B cell (primary cell): ENCODE measurements at regions of chr15 and their contacts with region 1.

Region 1: GRCh38 chr15:43769584-43770228 is 7.1 kb downstream of the ELL3 start:
- DNase-seq: peak; percentile 74
- ATAC-seq: peak; percentile 78
- H3K4me3 ChIP-seq: no peak overlapping the region
- H3K4me3 Mint-ChIP-seq: no peak overlapping the region
- H3K27ac ChIP-seq: no peak overlapping the region
- H3K27ac Mint-ChIP-seq: no peak overlapping the region
- H3K4me1 ChIP-seq: no peaks in the 10 kb centered on the region
- H3K4me1 Mint-ChIP-seq: peaks cover 19% of the 10 kb centered on the region
- H3K27me3 ChIP-seq: no peaks in the 10 kb centered on the region
- H3K27me3 Mint-ChIP-seq: no peaks in the 10 kb centered on the region
- CTCF ChIP-seq: peak; percentile 90

Region 2: DNA sequence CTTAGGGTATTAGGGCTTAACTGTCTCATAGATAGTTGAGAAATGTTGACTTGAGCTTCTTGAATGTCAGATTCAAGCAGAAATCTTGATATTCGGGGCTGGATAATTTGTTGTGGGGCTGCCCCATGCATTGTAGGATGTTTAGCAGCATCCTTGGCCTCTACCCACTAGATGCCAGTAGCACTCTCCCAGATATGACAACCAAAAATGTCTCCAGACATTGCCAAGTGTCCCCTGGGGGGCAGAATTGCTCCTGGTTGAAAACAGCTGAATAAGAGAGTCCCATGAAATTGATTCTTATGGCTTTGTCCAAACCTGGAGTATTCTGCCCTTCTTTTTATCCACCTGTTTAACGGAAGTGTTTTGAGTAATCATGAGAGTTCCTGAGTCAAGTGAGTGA is 423.4 kb before region 1 on chr15:
- CTCF ChIA-PET with region 1: no interaction called
- POLR2A ChIA-PET with region 1: no interaction called
- intact Hi-C with region 1: no loop called
- DNase-seq: no peak
- ATAC-seq: no peak
- H3K4me3 ChIP-seq: no peak overlapping the region
- H3K4me3 Mint-ChIP-seq: no peak overlapping the region
- H3K27ac ChIP-seq: no peak overlapping the region
- H3K27ac Mint-ChIP-seq: no peak overlapping the region
- H3K4me1 ChIP-seq: no peaks in the 10 kb centered on the region
- H3K4me1 Mint-ChIP-seq: no peaks in the 10 kb centered on the region
- H3K27me3 ChIP-seq: no peaks in the 10 kb centered on the region
- H3K27me3 Mint-ChIP-seq: no peaks in the 10 kb centered on the region
- CTCF ChIP-seq: no peak

Region 3: GRCh38 chr15:43702174-43702573 is 67.5 kb before region 1 on chr15:
- CTCF ChIA-PET with region 1: no interaction called
- POLR2A ChIA-PET with region 1: no interaction called
- intact Hi-C with region 1: no loop called
- DNase-seq: no peak
- ATAC-seq: no peak
- H3K4me3 ChIP-seq: no peak overlapping the region
- H3K4me3 Mint-ChIP-seq: no peak overlapping the region
- H3K27ac ChIP-seq: no peak overlapping the region
- H3K27ac Mint-ChIP-seq: no peak overlapping the region
- H3K4me1 ChIP-seq: no peaks in the 10 kb centered on the region
- H3K4me1 Mint-ChIP-seq: no peaks in the 10 kb centered on the region
- H3K27me3 ChIP-seq: no peaks in the 10 kb centered on the region
- H3K27me3 Mint-ChIP-seq: peaks cover 37% of the 10 kb centered on the region
- CTCF ChIP-seq: no peak

Region 4: GRCh38 chr15:43800286-43801141 is 30.8 kb after region 1 on chr15 and contains the start of gene HYPK:
- CTCF ChIA-PET with region 1: interaction called, 6 read pairs
- POLR2A ChIA-PET with region 1: no interaction called
- intact Hi-C with region 1: loop called (anchors 5 kb)
- DNase-seq: peak; percentile 92
- ATAC-seq: peak; percentile 98
- H3K4me3 ChIP-seq: peak within 1 kb of the TSS; percentile 85 to 99 (median 90)
- H3K4me3 Mint-ChIP-seq: peak within 1 kb of the TSS; percentile 98
- H3K27ac ChIP-seq: peak within 1 kb of the TSS; percentile 79 to 81
- H3K27ac Mint-ChIP-seq: peak within 1 kb of the TSS; percentile 96
- H3K4me1 ChIP-seq: peaks cover 14 to 27% of the 10 kb centered on the region in 2 donors
- H3K4me1 Mint-ChIP-seq: peaks cover 44% of the 10 kb centered on the region
- H3K27me3 ChIP-seq: no peaks in the 10 kb centered on the region
- H3K27me3 Mint-ChIP-seq: no peaks in the 10 kb centered on the region
- CTCF ChIP-seq: no peak
- total RNA-seq, gene HYPK: 24.0 and 25.7 TPM in 2 replicates

Region 5: GRCh38 chr15:43808960-43809678 is 39.4 kb after region 1 on chr15:
- CTCF ChIA-PET with region 1: interaction called, 14 read pairs
- POLR2A ChIA-PET with region 1: interaction called, 5 read pairs
- intact Hi-C with region 1: loop called (anchors 5 kb)
- DNase-seq: peak; percentile 87
- ATAC-seq: peak; percentile 94
- H3K4me3 ChIP-seq: peak overlapping the region in 1 of 5 experiments; percentile 28
- H3K4me3 Mint-ChIP-seq: peak overlapping the region; percentile 79
- H3K27ac ChIP-seq: peak overlapping the region; percentile 84 to 93
- H3K27ac Mint-ChIP-seq: peak overlapping the region; percentile 95
- H3K4me1 ChIP-seq: peaks cover 28 to 31% of the 10 kb centered on the region in 2 donors
- H3K4me1 Mint-ChIP-seq: peaks cover 25% of the 10 kb centered on the region
- H3K27me3 ChIP-seq: no peaks in the 10 kb centered on the region
- H3K27me3 Mint-ChIP-seq: no peaks in the 10 kb centered on the region
- CTCF ChIP-seq: no peak

Region 6: GRCh38 chr15:44414001-44414400 is 644.3 kb after region 1 on chr15:
- CTCF ChIA-PET with region 1: no interaction called
- POLR2A ChIA-PET with region 1: no interaction called
- intact Hi-C with region 1: no loop called
- DNase-seq: no peak
- ATAC-seq: no peak
- H3K4me3 ChIP-seq: no peak overlapping the region
- H3K4me3 Mint-ChIP-seq: no peak overlapping the region
- H3K27ac ChIP-seq: no peak overlapping the region
- H3K27ac Mint-ChIP-seq: no peak overlapping the region
- H3K4me1 ChIP-seq: no peaks in the 10 kb centered on the region
- H3K4me1 Mint-ChIP-seq: no peaks in the 10 kb centered on the region
- H3K27me3 ChIP-seq: no peaks in the 10 kb centered on the region
- H3K27me3 Mint-ChIP-seq: no peaks in the 10 kb centered on the region
- CTCF ChIP-seq: no peak